ENCODE measurements at regions of chr14 and their contacts with region 1.

Region 1: DNA sequence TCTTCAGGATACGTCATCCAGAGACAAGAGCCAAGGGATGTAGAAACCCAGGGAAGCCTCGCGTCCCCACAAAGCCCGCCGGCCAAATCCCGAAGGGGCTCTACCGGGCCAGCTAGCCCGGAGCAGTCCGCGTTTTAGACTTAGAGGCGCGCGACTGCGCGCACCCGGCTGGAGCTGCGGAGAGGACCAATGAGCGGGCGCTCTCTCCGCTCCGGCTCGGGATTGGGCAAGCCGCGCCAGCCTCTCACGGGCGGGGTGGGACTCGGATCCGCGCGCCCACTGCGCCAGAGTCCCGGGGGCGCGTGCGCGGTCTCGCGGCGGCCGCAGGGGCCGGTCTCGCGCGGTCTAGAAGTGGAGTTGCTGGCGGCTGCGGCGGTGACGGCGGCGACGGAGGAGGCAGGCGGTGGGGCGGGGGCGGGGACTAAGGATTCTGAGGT is 239 bp upstream of the PALS1 start:
- DNase-seq: peak; percentile 89 to 95
- ATAC-seq: peak; percentile 94 to 98 (median 96)
- H3K4me3 ChIP-seq: peak overlapping the region; percentile 75
- H3K4me3 Mint-ChIP-seq: peak overlapping the region; percentile 90
- H3K27ac ChIP-seq: peak overlapping the region; percentile 58
- H3K27ac Mint-ChIP-seq: peak overlapping the region; percentile 68 to 83
- H3K4me1 ChIP-seq: peaks cover 9% of the 10 kb centered on the region
- H3K4me1 Mint-ChIP-seq: peaks cover 15 to 18% of the 10 kb centered on the region in 2 donors
- H3K27me3 ChIP-seq: no peaks in the 10 kb centered on the region
- H3K27me3 Mint-ChIP-seq: no peaks in the 10 kb centered on the region
- CTCF ChIP-seq: no peak

Region 2: DNA sequence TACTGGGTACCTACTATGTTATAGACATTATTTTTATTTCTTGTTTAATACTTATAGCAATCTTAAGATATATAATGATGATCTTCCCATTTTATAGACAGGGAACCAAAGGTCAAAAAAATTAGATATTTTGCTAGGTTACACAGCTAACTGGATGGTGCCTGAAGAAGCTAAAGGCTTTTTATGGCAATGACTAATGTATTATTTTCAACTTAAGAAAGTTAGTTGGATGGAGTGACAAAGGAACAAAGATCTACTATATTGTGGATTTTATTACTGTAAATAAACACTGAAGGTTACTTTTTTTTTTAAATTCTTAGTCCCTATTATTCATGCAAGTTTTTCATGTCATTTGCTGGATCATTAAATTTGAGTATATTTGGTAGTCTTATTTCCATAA is 505.1 kb before region 1 on chr14:
- intact Hi-C with region 1: no loop called
- DNase-seq: no peak
- ATAC-seq: no peak
- H3K4me3 ChIP-seq: no peak overlapping the region
- H3K4me3 Mint-ChIP-seq: no peak overlapping the region
- H3K27ac ChIP-seq: no peak overlapping the region
- H3K27ac Mint-ChIP-seq: no peak overlapping the region
- H3K4me1 ChIP-seq: no peaks in the 10 kb centered on the region
- H3K4me1 Mint-ChIP-seq: no peaks in the 10 kb centered on the region
- H3K27me3 ChIP-seq: no peaks in the 10 kb centered on the region
- H3K27me3 Mint-ChIP-seq: no peaks in the 10 kb centered on the region
- CTCF ChIP-seq: no peak

Region 3: DNA sequence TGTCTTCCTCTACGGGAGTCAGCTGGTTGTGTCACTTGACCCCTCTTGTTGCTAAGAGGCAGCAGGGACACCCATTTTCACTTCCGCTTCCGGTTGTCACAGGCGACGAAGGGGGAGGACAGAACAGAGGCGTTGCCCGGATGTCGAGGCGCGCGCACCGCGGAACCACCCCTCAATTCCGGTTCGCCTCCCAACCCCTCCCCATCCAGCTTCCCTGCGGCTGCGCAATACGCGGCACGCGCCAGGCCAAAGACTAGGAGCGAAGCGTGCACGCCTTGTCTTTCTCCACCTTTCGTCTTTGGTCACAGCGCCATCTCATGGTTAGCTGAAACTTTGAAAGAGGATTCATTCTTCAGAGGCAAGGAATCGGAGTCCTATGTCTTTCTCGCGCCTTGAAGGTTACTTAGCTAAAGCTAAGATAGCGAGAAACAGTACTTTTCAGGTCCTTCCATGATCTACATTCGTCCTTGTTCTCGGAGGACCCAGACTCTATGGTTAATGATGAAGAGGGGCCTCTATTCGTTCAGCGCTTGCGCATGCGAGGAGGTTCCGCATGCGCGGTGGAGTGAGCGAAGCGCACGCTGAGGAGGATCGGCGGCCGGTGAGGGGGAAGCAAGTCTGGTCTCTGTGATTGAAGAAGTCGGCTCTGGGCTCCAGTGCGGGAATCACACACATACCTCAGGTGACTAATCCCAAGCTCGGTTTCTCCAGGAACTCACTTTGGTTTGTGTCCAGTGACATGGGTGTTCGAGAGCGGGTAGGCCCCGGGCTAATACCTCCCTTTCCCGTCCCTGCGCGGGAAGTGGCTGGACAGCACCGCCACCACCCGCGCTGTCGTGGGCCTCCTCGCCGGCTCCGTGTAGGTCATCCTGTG is 119.0 kb after region 1 on chr14 and contains the starts of genes ATP6V1D and EIF2S1:
- intact Hi-C with region 1: loop called (anchors 1 kb)
- DNase-seq: peak; percentile 99 to 100
- ATAC-seq: peak; percentile 90 to 98 (median 90)
- H3K4me3 ChIP-seq: peak within 1 kb of the TSS; percentile 82
- H3K4me3 Mint-ChIP-seq: peak within 1 kb of the TSS; percentile 99
- H3K27ac ChIP-seq: peak within 1 kb of the TSS; percentile 94
- H3K27ac Mint-ChIP-seq: peak within 1 kb of the TSS; percentile 99
- H3K4me1 ChIP-seq: peaks cover 17% of the 10 kb centered on the region
- H3K4me1 Mint-ChIP-seq: peaks cover 64 to 66% of the 10 kb centered on the region in 2 donors
- H3K27me3 ChIP-seq: no peaks in the 10 kb centered on the region
- H3K27me3 Mint-ChIP-seq: no peaks in the 10 kb centered on the region
- CTCF ChIP-seq: peak; percentile 99
- total RNA-seq, gene ATP6V1D: 61.9 to 77.5 (median 70.0) TPM
- total RNA-seq, gene EIF2S1: 31.6 to 37.7 (median 33.2) TPM

Region 4: DNA sequence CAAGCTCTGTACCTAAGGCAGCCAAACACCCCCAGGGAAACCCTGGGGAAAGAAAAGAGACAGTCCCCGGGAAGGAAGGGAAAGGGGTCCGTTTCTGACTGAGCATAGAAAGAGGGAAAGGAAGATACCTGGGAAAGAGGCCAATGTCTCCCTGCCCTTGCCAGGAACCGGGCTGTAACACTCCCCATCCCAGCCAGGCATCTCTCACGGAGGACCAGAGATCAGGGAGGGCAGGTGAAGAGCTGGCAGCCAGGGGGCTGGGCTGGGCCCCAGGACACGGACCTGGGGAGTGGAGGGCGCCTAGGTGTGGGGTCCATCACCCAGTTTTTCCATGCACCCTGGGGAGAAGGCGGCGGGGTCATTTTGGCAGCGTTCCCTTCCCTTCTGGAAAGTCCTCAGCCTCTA is 273.2 kb after region 1 on chr14:
- intact Hi-C with region 1: no loop called
- DNase-seq: peak in 1 of 2 donors; percentile 14
- ATAC-seq: peak in 1 of 3 donors; percentile 2
- H3K4me3 ChIP-seq: peak overlapping the region; percentile 60
- H3K4me3 Mint-ChIP-seq: peak overlapping the region; percentile 93
- H3K27ac ChIP-seq: peak overlapping the region; percentile 68
- H3K27ac Mint-ChIP-seq: peak overlapping the region; percentile 79 to 95
- H3K4me1 ChIP-seq: peaks cover 24% of the 10 kb centered on the region
- H3K4me1 Mint-ChIP-seq: peaks cover 25 to 34% of the 10 kb centered on the region in 2 donors
- H3K27me3 ChIP-seq: no peaks in the 10 kb centered on the region
- H3K27me3 Mint-ChIP-seq: peaks cover 6 to 7% of the 10 kb centered on the region in 2 donors
- CTCF ChIP-seq: no peak

Measured in natural killer cell (primary cell).